ENCODE measurements at regions of chr4 and their contacts with region 1.

Region 1: DNA sequence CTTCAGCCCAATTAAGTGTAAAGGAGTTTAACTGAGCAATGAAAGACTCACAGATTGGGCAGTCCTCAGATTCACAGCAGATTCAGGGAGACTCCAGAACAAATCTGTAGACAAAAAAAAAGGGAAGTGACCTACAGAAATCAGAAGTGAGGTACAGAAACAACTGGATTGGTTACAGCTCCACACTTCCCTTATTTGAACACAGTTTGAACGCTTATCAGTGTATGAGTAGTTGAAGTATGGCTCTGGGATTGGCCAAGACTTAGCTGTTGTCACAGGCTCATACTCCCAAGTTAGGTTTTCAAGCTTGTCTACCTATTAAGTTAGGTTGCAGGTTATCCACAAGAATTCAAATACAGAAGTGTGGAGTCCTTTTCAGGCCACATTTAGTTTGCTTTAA is 112.4 kb upstream of the ELOVL6 start:
- DNase-seq: peak; percentile 3
- H3K4me3 ChIP-seq: no peak overlapping the region
- H3K27ac ChIP-seq: no peak overlapping the region
- H3K4me1 ChIP-seq: no peaks in the 10 kb centered on the region
- CTCF ChIP-seq: no peak

Region 2: DNA sequence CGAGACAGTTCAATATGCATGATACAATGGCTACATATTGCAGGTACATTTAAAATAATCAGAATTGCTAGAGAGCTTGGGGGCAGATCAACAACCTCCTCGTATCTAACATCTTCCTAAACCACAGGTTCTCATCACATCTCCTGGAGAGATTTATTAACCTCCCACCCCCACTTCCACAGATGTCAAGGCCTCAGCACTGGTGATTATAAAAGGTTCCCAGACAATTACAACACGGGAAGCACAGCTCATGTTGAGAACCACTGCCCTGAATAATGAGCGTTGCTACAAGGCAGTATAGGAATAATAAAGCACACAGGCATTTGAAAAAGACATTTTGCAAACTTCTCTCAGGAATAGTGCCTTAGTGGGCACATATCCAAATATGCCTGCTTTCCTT is 155.1 kb before region 1 on chr4:
- CTCF ChIA-PET with region 1: no interaction called
- POLR2A ChIA-PET with region 1: no interaction called
- intact Hi-C with region 1: no loop called
- DNase-seq: no peak
- H3K4me3 ChIP-seq: no peak overlapping the region
- H3K27ac ChIP-seq: no peak overlapping the region
- H3K4me1 ChIP-seq: no peaks in the 10 kb centered on the region
- CTCF ChIP-seq: no peak

Region 3: GRCh38 chr4:110510955-110511544 is 200.3 kb after region 1 on chr4:
- CTCF ChIA-PET with region 1: no interaction called
- POLR2A ChIA-PET with region 1: no interaction called
- intact Hi-C with region 1: loop called (anchors 2 kb)
- DNase-seq: peak; percentile 77
- H3K4me3 ChIP-seq: no peak overlapping the region
- H3K27ac ChIP-seq: no peak overlapping the region
- H3K4me1 ChIP-seq: peaks cover 8% of the 10 kb centered on the region
- CTCF ChIP-seq: peak; percentile 92

Measured in OCI-LY7 (cell line).